ENCODE measurements at regions of chr3 and their contacts with region 1.

Region 1: GRCh38 chr3:44439499-44440295 is 37.8 kb downstream of the ZNF445 start:
- DNase-seq: peak; percentile 91
- H3K4me3 Mint-ChIP-seq: peak overlapping the region; percentile 25
- H3K27ac Mint-ChIP-seq: peak overlapping the region; percentile 90
- H3K4me1 Mint-ChIP-seq: peaks cover 47% of the 10 kb centered on the region
- H3K27me3 Mint-ChIP-seq: no peaks in the 10 kb centered on the region

Region 2: DNA sequence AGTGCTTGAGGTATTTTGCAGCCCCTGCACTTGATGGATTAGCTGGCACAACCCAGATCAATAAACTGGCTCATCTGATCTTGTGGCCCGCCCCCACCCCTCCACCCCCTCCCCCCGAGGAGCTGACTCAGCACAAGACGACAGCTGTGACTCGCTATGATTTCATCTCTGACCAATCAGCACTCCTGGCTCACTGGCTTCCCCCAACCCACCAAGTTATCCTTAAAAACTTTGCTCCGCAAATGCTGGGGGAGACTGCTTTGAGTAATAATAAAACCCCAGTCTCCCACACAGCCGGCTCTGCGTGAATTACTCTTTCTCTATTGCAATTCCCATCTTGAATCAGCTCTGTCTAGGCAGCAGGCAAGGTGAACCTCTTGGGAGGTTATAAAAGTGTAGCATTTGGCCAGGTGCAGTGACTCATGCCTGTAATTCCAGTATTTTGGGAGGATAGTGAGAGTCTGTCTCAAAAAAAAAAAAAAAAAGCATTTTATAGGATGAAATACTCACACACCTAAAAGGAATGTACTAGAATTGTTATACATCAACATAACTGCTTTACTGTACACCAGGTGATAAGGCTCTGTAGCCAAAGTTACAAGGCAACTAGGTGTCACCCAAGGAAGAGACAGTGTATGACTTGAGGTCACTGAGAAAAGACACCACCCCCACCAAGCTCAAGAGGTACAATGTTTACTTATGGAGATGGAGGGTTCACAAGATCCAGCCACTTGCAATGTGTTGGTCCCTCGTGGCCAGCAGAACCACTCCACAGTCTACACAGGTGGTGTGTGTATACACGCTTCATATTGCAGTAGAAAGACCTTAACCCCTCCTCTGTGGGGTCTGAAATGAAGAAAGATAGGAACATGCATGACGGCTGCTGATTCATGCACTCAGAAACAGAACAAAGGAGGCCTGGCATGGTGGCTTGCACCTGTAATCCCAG is 29.1 kb after region 1 on chr3:
- CTCF ChIA-PET with region 1: no interaction called
- POLR2A ChIA-PET with region 1: interaction called, 9 read pairs
- intact Hi-C with region 1: loop called (anchors 1 kb)
- DNase-seq: peak; percentile 74
- H3K4me3 Mint-ChIP-seq: no peak overlapping the region
- H3K27ac Mint-ChIP-seq: peak overlapping the region; percentile 64
- H3K4me1 Mint-ChIP-seq: peaks cover 34% of the 10 kb centered on the region
- H3K27me3 Mint-ChIP-seq: no peaks in the 10 kb centered on the region

Region 3: GRCh38 chr3:44477312-44478030 is 37.8 kb after region 1 on chr3 and contains the start of gene ZNF445:
- CTCF ChIA-PET with region 1: interaction called, 3 read pairs
- POLR2A ChIA-PET with region 1: interaction called, 3 read pairs
- intact Hi-C with region 1: loop called (anchors 2 kb)
- DNase-seq: peak; percentile 83
- H3K4me3 Mint-ChIP-seq: peak within 1 kb of the TSS; percentile 85
- H3K27ac Mint-ChIP-seq: peak within 1 kb of the TSS; percentile 74
- H3K4me1 Mint-ChIP-seq: peaks cover 25% of the 10 kb centered on the region
- H3K27me3 Mint-ChIP-seq: no peaks in the 10 kb centered on the region
- total RNA-seq, gene ZNF445: 16.6 to 18.7 TPM